H1 (cell line): ENCODE measurements at regions of chr9 and their contacts with region 1.

Region 1: GRCh38 chr9:128412120-128412790 is 8.4 kb upstream of the CERCAM start:
- DNase-seq: peak; percentile 87 to 100
- H3K4me3 ChIP-seq: peak overlapping the region in 1 of 4 experiments; percentile 31; a peak in 1 of 8 replicates
- H3K27ac ChIP-seq: no peak overlapping the region
- H3K4me1 ChIP-seq: peaks cover 13 to 37% (median 20%) of the 10 kb centered on the region in 4 experiments
- H3K27me3 ChIP-seq: peaks cover 38 to 67% (median 57%) of the 10 kb centered on the region in 4 experiments
- CTCF ChIP-seq: peak; percentile 96 to 99 (median 98)
- EP300 ChIP-seq: no peak
- POLR2A ChIP-seq: no peak
- RAD21 ChIP-seq: peak; percentile 100

Region 2: DNA sequence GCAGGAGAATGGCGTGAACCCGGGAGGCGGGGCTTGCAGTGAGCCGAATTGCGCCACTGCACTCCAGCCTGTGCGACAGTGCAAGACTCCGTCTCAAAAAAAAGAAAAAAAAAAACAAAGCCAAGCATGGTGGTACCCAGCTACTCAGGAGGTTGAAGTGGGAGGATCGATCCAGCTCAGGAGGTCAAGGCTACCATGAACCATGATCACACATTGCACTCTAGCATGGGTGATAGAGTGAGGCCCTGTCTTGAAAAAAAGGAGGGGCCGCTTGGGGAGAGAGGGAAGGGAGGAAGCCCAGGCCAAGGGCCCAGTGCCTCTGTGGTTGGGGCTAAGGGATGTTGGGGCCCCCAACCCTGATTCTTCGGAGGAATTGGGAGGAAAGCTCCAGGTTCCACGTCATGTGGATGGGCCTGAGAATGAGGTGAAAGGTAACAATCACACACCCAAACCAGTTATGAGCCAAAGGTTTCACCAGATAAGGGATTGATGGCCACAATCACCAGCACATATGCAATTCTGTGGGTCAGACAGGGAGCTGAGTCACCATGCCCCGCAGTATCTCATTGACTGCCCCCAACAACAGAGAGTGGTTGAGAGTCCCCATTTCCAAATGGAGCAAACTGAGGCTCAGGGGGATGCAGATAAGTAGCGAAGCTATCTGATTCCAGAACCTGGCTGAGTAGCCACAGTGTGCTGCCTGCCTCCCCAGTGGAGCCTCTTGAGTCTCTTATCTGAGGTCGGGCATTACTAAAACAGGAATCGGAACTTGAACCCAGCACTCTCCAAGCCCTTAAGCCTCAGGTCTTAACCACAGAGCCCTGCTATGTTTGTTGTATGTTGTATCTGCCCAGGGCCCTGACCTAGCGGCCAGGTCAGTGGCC is 115.7 kb before region 1 on chr9:
- CTCF ChIA-PET with region 1: interaction called, 88 read pairs
- POLR2A ChIA-PET with region 1: no interaction called
- DNase-seq: no peak
- H3K4me3 ChIP-seq: no peak overlapping the region
- H3K27ac ChIP-seq: no peak overlapping the region
- H3K4me1 ChIP-seq: no peaks in the 10 kb centered on the region
- H3K27me3 ChIP-seq: no peaks in the 10 kb centered on the region
- CTCF ChIP-seq: no peak
- EP300 ChIP-seq: no peak
- POLR2A ChIP-seq: no peak
- RAD21 ChIP-seq: no peak

Region 3: DNA sequence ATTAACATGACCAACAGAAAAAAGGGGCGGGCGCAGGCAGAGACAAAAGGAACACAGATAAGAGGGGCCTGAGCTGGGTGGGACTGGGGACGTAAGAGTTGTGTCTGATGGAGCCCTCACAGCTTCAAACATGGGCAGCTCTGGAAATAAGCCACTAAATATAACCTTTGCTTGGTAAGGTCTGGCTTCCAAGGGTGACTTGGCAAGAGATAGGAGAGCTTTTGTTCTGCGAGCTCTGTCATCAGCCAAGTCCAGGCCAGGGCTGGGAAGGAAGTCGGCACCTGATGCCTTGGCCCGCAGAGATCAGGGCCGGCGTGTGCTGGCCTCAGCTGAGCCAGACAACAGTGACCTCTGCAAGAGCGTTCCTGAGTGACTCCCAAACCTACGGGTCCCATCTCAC is 101.8 kb before region 1 on chr9:
- CTCF ChIA-PET with region 1: interaction called, 22 read pairs
- POLR2A ChIA-PET with region 1: no interaction called
- DNase-seq: no peak
- H3K4me3 ChIP-seq: no peak overlapping the region
- H3K27ac ChIP-seq: no peak overlapping the region
- H3K4me1 ChIP-seq: no peaks in the 10 kb centered on the region
- H3K27me3 ChIP-seq: no peaks in the 10 kb centered on the region
- CTCF ChIP-seq: no peak
- EP300 ChIP-seq: no peak
- POLR2A ChIP-seq: no peak
- RAD21 ChIP-seq: no peak

Region 4: DNA sequence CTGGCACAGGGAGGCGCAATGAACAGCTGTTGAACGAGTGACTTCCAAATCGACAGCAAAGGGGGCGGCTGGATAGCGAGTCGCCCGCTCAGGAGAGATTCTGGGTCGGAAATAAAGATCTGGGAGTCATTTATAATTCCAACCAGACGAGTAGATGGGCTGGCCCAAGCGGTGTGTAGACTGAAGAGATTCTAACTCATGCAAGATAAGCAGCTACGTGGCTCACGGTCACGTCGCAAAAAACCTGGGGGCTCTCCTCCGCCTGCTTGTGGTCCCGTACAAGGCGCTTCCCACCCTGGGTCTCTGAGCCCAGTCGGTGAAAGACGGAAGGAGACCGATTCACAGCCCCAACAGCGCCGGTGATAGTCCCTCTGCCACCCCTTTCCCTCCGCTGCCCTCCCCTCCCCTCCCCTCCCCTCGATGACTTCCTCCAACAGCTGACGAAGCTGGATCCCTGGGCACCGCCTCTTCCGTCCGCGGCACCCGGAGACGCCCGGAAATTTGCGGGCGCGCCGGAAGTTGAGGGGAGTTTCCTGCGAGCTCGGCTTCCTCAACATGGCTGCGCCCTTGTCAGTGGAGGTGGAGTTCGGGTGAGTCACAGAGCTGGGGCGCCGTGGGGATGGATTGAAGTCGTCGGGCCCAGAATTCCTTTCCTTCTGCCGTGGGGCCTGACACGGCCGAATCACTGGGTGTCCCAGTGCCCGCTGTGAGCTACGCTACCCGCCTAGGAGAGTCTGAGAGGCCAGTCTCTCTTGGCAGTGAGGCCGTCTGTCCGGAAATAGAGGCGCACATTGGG is 41.2 kb before region 1 on chr9 and contains the start of gene URM1:
- CTCF ChIA-PET with region 1: interaction called, 544 read pairs
- POLR2A ChIA-PET with region 1: interaction called, 4 read pairs
- DNase-seq: peak; percentile 70 to 91
- H3K4me3 ChIP-seq: peak within 1 kb of the TSS; percentile 82 to 96 (median 95)
- H3K27ac ChIP-seq: no peak within 1 kb of the TSS; the same call in 1 of the 2 replicates
- H3K4me1 ChIP-seq: peaks cover 0 to 8% (median 3%) of the 10 kb centered on the region in 4 experiments; a peak in 4 of 7 replicates
- H3K27me3 ChIP-seq: peaks cover 9 to 24% (median 13%) of the 10 kb centered on the region in 4 experiments
- CTCF ChIP-seq: no peak
- EP300 ChIP-seq: no peak
- POLR2A ChIP-seq: peak in 1 of 2 experiments; percentile 63; a peak in 2 of 3 replicates
- RAD21 ChIP-seq: no peak
- total RNA-seq, gene URM1: 60.5 and 62.3 TPM in 2 replicates

Region 5: GRCh38 chr9:128396970-128397613 is 15.2 kb before region 1 on chr9:
- CTCF ChIA-PET with region 1: interaction called, 96 read pairs
- POLR2A ChIA-PET with region 1: interaction called, 25 read pairs
- DNase-seq: peak in 1 of 2 experiments; percentile 57
- H3K4me3 ChIP-seq: no peak overlapping the region
- H3K27ac ChIP-seq: no peak overlapping the region
- H3K4me1 ChIP-seq: peaks cover 9 to 28% (median 21%) of the 10 kb centered on the region in 4 experiments
- H3K27me3 ChIP-seq: peaks cover 85 to 100% (median 96%) of the 10 kb centered on the region in 4 experiments
- CTCF ChIP-seq: no peak
- EP300 ChIP-seq: peak in 1 of 2 experiments; percentile 43; a peak in 1 of 3 replicates
- POLR2A ChIP-seq: no peak
- RAD21 ChIP-seq: no peak